Gastrocnemius medialis (tissue), 4 donors: ENCODE measurements at regions of chr13 and their contacts with region 1.

Region 1: GRCh38 chr13:33125821-33126570 is 109.8 kb downstream of the KL start:
- DNase-seq: peak; percentile 81 to 84
- ATAC-seq: peak; percentile 93 to 94
- H3K4me3 ChIP-seq: peak overlapping the region; percentile 16 to 32 (median 26)
- H3K27ac ChIP-seq: peak overlapping the region; percentile 78 to 85 (median 82)
- H3K4me1 ChIP-seq: peaks cover 42 to 61% of the 10 kb centered on the region in 2 donors
- H3K27me3 ChIP-seq: no peaks in the 10 kb centered on the region
- CTCF ChIP-seq: no peak
- POLR2A ChIP-seq: no peak

Region 2: DNA sequence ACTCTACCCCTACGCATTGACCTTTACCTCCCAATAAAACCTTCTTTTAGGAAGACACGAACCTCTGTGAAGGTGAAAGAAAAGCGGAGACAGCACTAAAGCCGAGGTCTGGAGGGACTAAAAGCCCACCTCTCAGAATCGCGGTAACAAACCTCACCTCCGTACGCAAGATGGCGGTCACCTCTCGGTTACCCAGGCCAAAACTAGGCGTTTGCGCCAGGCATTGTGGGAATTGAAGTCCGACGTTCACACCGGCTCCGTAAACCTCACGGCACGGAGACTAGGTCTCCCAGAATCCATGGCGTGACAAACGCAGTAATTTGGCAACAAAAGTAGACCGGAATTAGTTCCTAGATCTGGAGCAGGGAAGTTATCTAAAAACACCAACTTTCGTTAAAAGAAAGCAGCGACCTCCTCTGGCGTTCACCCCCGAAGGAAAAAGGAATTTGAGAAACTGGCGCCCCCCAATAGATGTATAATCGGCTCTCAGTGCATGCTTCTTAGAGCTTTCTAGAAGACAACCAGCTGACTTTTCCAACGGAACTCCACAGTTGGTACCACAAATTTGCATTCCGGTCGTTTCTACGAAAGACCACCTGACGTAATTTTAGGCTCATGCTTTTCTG is 587.3 kb before region 1 on chr13 and contains the start of gene N4BP2L2:
- in situ Hi-C with region 1: no loop called
- intact Hi-C with region 1: loop called (anchors 10 kb)
- DNase-seq: peak; percentile 95
- ATAC-seq: peak; percentile 96 to 98
- H3K4me3 ChIP-seq: peak within 1 kb of the TSS; percentile 77 to 94 (median 90)
- H3K27ac ChIP-seq: peak within 1 kb of the TSS; percentile 88 to 99 (median 97)
- H3K4me1 ChIP-seq: peaks cover 37 to 40% of the 10 kb centered on the region in 2 donors
- H3K27me3 ChIP-seq: no peaks in the 10 kb centered on the region
- CTCF ChIP-seq: peak in 1 of 5 experiments; percentile 36
- POLR2A ChIP-seq: peak; percentile 65 to 79
- total RNA-seq, gene N4BP2L2: 52.2 to 370 (median 176) TPM

Region 3: GRCh38 chr13:33174931-33175330 is 48.9 kb after region 1 on chr13:
- in situ Hi-C with region 1: no loop called
- intact Hi-C with region 1: loop called (anchors 2 kb)
- DNase-seq: no peak
- ATAC-seq: no peak
- H3K4me3 ChIP-seq: no peak overlapping the region
- H3K27ac ChIP-seq: peak overlapping the region in 2 of 4 donors; percentile 11 to 12
- H3K4me1 ChIP-seq: peaks cover 23 to 52% of the 10 kb centered on the region in 2 donors
- H3K27me3 ChIP-seq: no peaks in the 10 kb centered on the region
- CTCF ChIP-seq: no peak
- POLR2A ChIP-seq: no peak

Region 4: GRCh38 chr13:33285420-33286124 is 159.6 kb after region 1 on chr13 and contains the start of gene STARD13:
- in situ Hi-C with region 1: no loop called
- intact Hi-C with region 1: loop called (anchors 2 kb)
- DNase-seq: peak; percentile 92 to 93
- ATAC-seq: peak; percentile 92 to 94
- H3K4me3 ChIP-seq: peak within 1 kb of the TSS; percentile 70 to 84 (median 74)
- H3K27ac ChIP-seq: peak within 1 kb of the TSS; percentile 84 to 93 (median 90)
- H3K4me1 ChIP-seq: peaks cover 21 to 33% of the 10 kb centered on the region in 2 donors
- H3K27me3 ChIP-seq: no peaks in the 10 kb centered on the region
- CTCF ChIP-seq: peak; percentile 18 to 45 (median 37)
- POLR2A ChIP-seq: peak; percentile 79 to 91
- total RNA-seq, gene STARD13: 7.7 to 19.3 (median 12.0) TPM

Region 5: GRCh38 chr13:33312150-33312860 is 186.3 kb after region 1 on chr13:
- in situ Hi-C with region 1: no loop called
- intact Hi-C with region 1: loop called (anchors 2 kb)
- DNase-seq: no peak
- ATAC-seq: peak; percentile 68
- H3K4me3 ChIP-seq: no peak overlapping the region
- H3K27ac ChIP-seq: no peak overlapping the region
- H3K4me1 ChIP-seq: peaks cover 0 to 8% of the 10 kb centered on the region in 2 donors
- H3K27me3 ChIP-seq: no peaks in the 10 kb centered on the region
- CTCF ChIP-seq: peak; percentile 29 to 52 (median 39)
- POLR2A ChIP-seq: no peak

Region 6: GRCh38 chr13:33349986-33350826 is 224.2 kb after region 1 on chr13:
- in situ Hi-C with region 1: no loop called
- intact Hi-C with region 1: loop called (anchors 5 kb)
- DNase-seq: peak; percentile 34 to 47
- ATAC-seq: peak; percentile 26 to 28
- H3K4me3 ChIP-seq: peak overlapping the region; percentile 60 to 85 (median 80)
- H3K27ac ChIP-seq: peak overlapping the region; percentile 60 to 82 (median 78)
- H3K4me1 ChIP-seq: peaks cover 23 to 33% of the 10 kb centered on the region in 2 donors
- H3K27me3 ChIP-seq: no peaks in the 10 kb centered on the region
- CTCF ChIP-seq: no peak
- POLR2A ChIP-seq: peak; percentile 20 to 36